ENCODE measurements at regions of chr19 and their contacts with region 1.

Region 1: DNA sequence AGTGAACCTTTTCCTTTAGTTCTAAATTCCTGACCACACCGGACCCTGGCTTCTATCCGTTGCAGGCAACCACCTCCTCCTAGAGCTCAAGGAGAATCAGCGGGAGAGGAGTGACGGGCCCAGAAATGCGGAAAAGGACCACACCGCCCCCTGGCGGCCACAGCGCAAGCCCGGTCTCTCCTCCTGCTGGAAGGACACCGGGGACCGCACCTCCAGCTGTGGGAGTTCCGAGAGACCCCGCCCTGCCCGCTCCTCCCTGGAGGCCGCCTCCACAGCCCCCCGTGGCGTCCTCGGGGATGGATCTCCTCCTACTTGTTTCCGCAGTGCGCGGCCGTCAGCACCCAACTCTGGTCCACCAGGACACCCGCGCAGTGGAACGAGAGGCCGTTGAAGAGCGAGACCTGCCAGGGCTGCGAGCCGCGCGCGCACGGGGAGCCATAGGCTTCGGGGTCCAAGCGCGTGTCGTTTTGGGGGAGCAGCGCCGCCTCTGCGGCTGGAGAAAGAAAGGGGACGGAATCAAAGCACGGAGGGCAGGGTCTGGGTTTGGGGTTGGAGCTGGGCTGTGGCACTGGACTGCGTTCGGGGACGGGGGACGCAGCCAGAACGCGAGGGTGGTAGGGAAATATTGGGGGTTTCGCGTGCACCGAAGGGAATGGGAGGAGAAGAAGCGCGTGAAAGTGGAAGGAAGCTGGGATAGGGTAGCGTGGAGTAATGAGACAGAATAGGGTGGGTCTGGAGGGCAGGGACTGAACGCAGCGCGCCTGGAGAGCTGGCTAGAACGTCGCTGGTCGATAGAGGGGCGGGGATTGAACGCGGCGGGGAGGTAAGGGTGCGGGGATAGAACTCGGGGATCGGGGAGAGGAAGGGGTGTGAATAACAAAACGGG is 2.5 kb downstream of the KLK10 start:
- DNase-seq: peak; percentile 88 to 97
- H3K4me3 ChIP-seq: peak overlapping the region; percentile 79
- H3K27ac ChIP-seq: peak overlapping the region; percentile 81
- H3K4me1 ChIP-seq: peaks cover 19% of the 10 kb centered on the region
- H3K27me3 ChIP-seq: no peaks in the 10 kb centered on the region
- CTCF ChIP-seq: peak; percentile 99

Region 2: DNA sequence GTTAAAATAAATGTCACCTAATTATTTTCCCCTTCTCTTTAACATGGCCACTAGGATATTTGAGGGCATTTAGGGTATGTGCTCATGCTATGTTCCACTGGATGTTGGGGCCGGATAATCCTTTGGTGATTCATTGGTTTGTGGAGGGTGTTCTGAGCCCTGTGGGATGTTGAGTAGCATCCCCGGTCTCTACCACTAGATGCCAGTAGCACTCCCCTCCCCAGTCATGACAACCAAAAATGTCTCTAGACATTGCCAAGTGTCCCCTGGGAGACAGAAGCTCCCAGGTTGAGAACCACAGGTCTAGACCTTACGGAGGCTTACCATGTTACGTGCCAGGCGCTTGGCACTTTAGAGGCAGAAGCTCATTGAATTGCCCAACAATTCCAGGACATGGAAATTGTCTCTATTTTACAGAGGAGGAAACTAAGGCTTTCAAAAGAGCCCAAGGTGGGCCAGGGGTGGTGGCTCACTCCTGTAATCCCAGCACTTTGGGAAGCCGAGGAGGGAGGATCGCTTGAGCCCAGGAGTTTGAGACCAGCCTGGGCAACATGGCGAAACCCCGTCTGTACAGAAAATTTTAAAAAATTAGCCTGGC is 311.5 kb before region 1 on chr19:
- CTCF ChIA-PET with region 1: no interaction called
- POLR2A ChIA-PET with region 1: no interaction called
- intact Hi-C with region 1: loop called (anchors 10 kb)
- DNase-seq: peak; percentile 49 to 55
- H3K4me3 ChIP-seq: no peak overlapping the region
- H3K27ac ChIP-seq: no peak overlapping the region
- H3K4me1 ChIP-seq: no peaks in the 10 kb centered on the region
- H3K27me3 ChIP-seq: peaks cover 91% of the 10 kb centered on the region
- CTCF ChIP-seq: peak; percentile 75

Region 3: GRCh38 chr19:50909240-50910070 is 107.6 kb before region 1 on chr19:
- CTCF ChIA-PET with region 1: interaction called, 3 read pairs
- POLR2A ChIA-PET with region 1: interaction called, 30 read pairs
- intact Hi-C with region 1: no loop called
- DNase-seq: peak; percentile 58 to 79
- H3K4me3 ChIP-seq: no peak overlapping the region
- H3K27ac ChIP-seq: no peak overlapping the region
- H3K4me1 ChIP-seq: no peaks in the 10 kb centered on the region
- H3K27me3 ChIP-seq: peaks cover 58% of the 10 kb centered on the region
- CTCF ChIP-seq: no peak

Region 4: GRCh38 chr19:50952910-50953309 is 64.1 kb before region 1 on chr19 and contains the start of gene KLK5:
- CTCF ChIA-PET with region 1: interaction called, 30 read pairs
- POLR2A ChIA-PET with region 1: interaction called, 23 read pairs
- intact Hi-C with region 1: loop called (anchors 1 kb)
- DNase-seq: peak; percentile 86 to 87
- H3K4me3 ChIP-seq: peak within 1 kb of the TSS; percentile 68
- H3K27ac ChIP-seq: peak within 1 kb of the TSS; percentile 55
- H3K4me1 ChIP-seq: peaks cover 13% of the 10 kb centered on the region
- H3K27me3 ChIP-seq: no peaks in the 10 kb centered on the region
- CTCF ChIP-seq: no peak
- total RNA-seq, gene KLK5: 405 and 412 TPM in 2 replicates

Region 5: DNA sequence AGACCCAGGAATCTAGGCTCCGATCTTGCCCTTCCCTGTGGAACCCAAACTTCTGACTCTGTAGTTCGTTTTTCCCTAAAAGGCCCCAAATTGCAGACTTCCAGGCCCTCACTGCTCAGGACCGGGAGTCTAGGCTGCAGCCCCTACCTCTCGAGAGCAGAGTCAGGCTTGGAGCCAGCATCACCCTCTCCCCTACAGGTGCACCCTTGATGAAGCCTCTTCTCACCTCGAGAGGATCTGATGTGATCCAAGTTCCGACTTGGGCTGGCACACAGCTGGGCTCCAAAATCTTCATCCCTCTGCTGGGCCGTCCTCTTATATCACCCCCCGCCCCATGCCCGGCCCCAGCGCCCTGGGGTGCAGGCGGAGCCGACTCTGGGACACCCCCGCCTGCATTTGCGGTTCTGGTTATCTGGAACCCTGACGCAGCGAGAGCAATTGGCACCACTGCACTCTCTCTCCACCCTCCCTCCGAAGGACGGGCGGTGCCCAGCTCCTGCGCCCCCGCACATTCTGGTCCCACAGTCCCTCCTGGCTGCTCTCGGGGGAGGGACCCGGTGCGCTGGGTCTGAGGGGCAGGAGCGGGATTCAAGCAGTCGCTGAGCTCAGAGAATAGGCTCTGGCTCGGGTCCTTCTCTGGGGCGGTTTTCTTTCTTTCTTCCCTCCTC is 33.3 kb before region 1 on chr19 and contains the start of gene KLK7:
- CTCF ChIA-PET with region 1: interaction called, 21 read pairs
- POLR2A ChIA-PET with region 1: no interaction called
- intact Hi-C with region 1: no loop called
- DNase-seq: peak in 1 of 2 experiments; percentile 65
- H3K4me3 ChIP-seq: no peak within 1 kb of the TSS
- H3K27ac ChIP-seq: no peak within 1 kb of the TSS
- H3K4me1 ChIP-seq: peaks cover 12% of the 10 kb centered on the region
- H3K27me3 ChIP-seq: no peaks in the 10 kb centered on the region
- CTCF ChIP-seq: no peak
- total RNA-seq, gene KLK7: 98.1 and 138 TPM in 2 replicates

Region 6: DNA sequence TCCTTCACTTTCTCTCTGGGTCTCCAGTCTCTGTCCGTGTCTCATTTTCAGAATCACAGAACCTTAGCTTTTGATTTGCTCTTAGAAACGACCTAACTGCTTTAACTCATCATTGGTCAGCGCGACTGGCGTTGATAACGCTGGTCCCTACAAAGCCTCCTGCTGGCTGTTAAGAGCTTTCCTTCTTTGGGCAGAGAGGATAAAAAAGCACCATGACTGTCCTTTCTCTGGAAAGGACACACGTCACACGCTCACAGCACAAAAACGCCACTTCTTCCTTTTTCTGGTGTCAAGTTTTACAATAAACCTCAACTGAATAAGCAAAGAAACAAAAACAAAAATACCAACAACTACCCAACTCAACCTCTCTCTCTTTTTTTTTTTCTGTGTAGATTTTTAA is 19.5 kb after region 1 on chr19:
- CTCF ChIA-PET with region 1: interaction called, 12 read pairs
- POLR2A ChIA-PET with region 1: interaction called, 15 read pairs
- intact Hi-C with region 1: no loop called
- DNase-seq: peak in 1 of 2 experiments; percentile 12
- H3K4me3 ChIP-seq: no peak overlapping the region
- H3K27ac ChIP-seq: no peak overlapping the region
- H3K4me1 ChIP-seq: no peaks in the 10 kb centered on the region
- H3K27me3 ChIP-seq: no peaks in the 10 kb centered on the region
- CTCF ChIP-seq: no peak

Region 7: GRCh38 chr19:51166846-51167490 is 149.9 kb after region 1 on chr19:
- CTCF ChIA-PET with region 1: no interaction called
- POLR2A ChIA-PET with region 1: no interaction called
- intact Hi-C with region 1: loop called (anchors 5 kb)
- DNase-seq: no peak
- H3K4me3 ChIP-seq: no peak overlapping the region
- H3K27ac ChIP-seq: no peak overlapping the region
- H3K4me1 ChIP-seq: no peaks in the 10 kb centered on the region
- H3K27me3 ChIP-seq: peaks cover 81% of the 10 kb centered on the region
- CTCF ChIP-seq: no peak

Measured in PC-9 (cell line).